Dendritic cell treated with granulocyte-macrophage colony-stimulating factor and Interleukin-4, amounts not matched to agents 40 ng/mL and 50 ng/mL, for 4 days (primary cell): ENCODE measurements at regions of chr16 and their contacts with region 1.

Region 1: DNA sequence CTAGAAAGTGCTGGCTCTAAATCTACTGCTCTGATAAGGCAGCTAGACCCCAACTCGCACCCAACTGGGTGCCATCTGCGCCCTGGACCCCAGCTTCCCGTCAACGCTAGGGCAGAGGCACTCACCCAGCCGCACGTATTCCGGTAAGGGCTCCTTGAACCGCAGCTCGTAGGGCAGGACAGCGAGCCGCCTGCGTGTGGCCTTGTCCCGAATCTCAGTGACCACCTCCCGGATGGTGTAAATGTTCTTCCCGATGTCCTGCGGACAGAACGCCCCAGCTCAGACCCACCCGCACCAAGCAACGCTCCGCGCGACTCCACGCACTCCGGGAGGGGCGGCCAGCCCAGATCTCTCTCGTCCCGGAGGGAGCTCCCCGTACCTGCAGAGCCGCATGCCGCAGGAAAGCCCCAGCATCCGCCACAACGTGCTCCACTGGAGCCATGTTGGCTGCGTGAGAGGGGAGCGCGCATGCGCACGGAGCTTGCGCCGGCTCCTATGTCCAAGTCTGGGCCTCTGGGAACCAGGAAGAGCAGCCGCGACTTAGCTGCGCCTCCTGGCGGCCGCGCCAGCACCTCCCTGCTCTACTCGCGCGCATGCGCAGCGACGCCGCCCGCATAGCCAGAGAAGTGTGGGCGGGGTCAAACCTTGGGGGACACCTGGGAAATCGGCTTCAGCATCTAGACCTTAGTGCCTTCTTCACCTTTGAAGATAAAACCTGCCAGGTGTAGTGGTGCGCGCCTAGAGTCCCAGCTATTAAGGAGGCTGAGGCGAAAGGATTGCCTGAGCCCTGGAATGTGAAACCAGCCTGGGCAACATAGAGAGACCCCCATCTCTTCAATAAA is at the start of gene NOB1:
- H3K4me3 Mint-ChIP-seq: peak within 1 kb of the TSS; percentile 100
- H3K27ac Mint-ChIP-seq: peak within 1 kb of the TSS; percentile 98
- H3K4me1 Mint-ChIP-seq: peaks cover 23% of the 10 kb centered on the region
- H3K27me3 Mint-ChIP-seq: peaks cover 6% of the 10 kb centered on the region

Region 2: GRCh38 chr16:69709456-69710084 is 45.1 kb before region 1 on chr16:
- intact Hi-C with region 1: loop called (anchors 1 kb)
- H3K4me3 Mint-ChIP-seq: no peak overlapping the region
- H3K27ac Mint-ChIP-seq: no peak overlapping the region
- H3K4me1 Mint-ChIP-seq: no peaks in the 10 kb centered on the region
- H3K27me3 Mint-ChIP-seq: no peaks in the 10 kb centered on the region

Region 3: GRCh38 chr16:69726296-69727060 is 28.2 kb before region 1 on chr16 and contains the start of gene NQO1:
- intact Hi-C with region 1: loop called (anchors 1 kb)
- H3K4me3 Mint-ChIP-seq: peak within 1 kb of the TSS; percentile 90
- H3K27ac Mint-ChIP-seq: peak within 1 kb of the TSS; percentile 95
- H3K4me1 Mint-ChIP-seq: peaks cover 34% of the 10 kb centered on the region
- H3K27me3 Mint-ChIP-seq: no peaks in the 10 kb centered on the region